PC-3 (cell line): ENCODE measurements at regions of chr16 and their contacts with region 1.

Region 1: DNA sequence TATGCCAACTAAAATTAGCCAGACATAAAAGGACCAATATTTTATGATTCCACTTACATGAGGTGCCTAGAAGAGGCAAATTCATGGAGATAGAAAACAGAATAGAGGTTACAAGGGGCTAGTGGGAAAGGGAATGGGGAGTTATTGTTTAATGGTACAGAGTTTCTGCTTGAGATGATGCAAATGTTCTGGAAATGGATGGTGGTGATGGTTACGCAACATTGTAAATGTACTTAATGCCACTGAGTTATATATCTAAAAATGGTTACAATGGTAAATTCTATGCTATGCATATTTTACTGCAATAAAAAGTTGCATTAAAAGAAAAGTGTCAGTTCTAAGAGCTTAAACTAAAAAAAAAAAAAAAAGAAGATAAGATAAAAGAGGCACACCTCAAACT is 17.9 kb downstream of the MT1X start:
- DNase-seq: no peak
- ATAC-seq: no peak
- H3K4me3 ChIP-seq: no peak overlapping the region
- H3K27ac ChIP-seq: no peak overlapping the region
- H3K4me1 ChIP-seq: peaks cover 12% of the 10 kb centered on the region
- H3K27me3 ChIP-seq: no peaks in the 10 kb centered on the region
- CTCF ChIP-seq: no peak

Region 2: DNA sequence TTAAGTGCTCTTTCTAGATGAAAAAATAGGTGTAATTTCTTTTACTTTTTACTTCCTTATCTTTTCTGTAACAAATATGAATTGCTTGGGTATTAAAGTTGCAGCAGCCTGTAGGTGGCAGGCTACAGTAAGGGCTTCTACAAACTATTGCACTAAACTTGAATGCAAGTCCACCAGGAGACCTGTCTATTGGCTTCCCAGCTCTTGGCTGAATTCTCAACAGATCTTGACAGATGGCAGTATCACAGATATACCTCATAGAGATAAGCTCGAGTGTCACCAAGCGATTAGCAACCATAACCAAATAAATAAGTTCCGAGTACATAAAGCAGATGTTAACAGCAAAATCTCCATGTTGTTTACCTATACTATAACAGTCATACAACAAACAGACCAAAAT is 186.2 kb before region 1 on chr16:
- CTCF ChIA-PET with region 1: interaction called, 6 read pairs
- POLR2A ChIA-PET with region 1: no interaction called
- intact Hi-C with region 1: loop called (anchors 1 kb)
- DNase-seq: peak; percentile 64
- ATAC-seq: peak; percentile 68
- H3K4me3 ChIP-seq: no peak overlapping the region
- H3K27ac ChIP-seq: no peak overlapping the region
- H3K4me1 ChIP-seq: peaks cover 32% of the 10 kb centered on the region
- H3K27me3 ChIP-seq: no peaks in the 10 kb centered on the region
- CTCF ChIP-seq: peak; percentile 76

Region 3: GRCh38 chr16:56576585-56577293 is 123.5 kb before region 1 on chr16:
- CTCF ChIA-PET with region 1: interaction called, 4 read pairs
- POLR2A ChIA-PET with region 1: no interaction called
- intact Hi-C with region 1: loop called (anchors 1 kb)
- DNase-seq: peak; percentile 88
- ATAC-seq: peak; percentile 93
- H3K4me3 ChIP-seq: no peak overlapping the region
- H3K27ac ChIP-seq: peak overlapping the region; percentile 40; the same call in 1 of the 2 replicates
- H3K4me1 ChIP-seq: peaks cover 4% of the 10 kb centered on the region; the same call in 1 of the 2 replicates
- H3K27me3 ChIP-seq: no peaks in the 10 kb centered on the region
- CTCF ChIP-seq: peak; percentile 84

Region 4: DNA sequence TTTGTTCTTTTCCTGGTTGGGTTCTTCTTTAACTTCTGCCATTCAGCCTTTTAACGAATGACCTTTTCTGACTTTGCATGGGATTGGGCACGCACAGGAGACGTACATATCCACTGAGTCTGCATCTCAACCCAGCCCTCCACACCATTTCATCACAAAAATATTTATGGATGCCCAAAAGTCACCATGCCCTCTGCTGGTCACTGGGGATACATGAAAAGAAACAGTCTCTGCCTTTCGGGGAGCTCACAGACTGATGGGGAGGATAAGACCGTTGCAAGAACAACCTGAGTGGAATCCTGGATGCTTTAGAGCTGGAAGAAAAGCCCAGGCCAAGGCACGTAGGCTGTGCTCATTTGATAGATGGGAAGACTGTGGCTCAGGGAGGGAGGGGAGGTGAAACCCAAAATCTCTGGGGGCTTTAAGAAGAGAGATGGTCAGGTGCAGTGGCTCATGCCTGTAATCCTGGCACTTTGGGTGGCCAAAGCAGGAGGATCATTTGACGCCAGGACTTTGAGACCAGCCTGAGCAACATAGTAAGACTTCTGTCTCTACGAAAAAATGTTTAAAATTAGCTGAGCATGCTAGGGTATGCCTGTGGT is 99.7 kb before region 1 on chr16:
- CTCF ChIA-PET with region 1: interaction called, 29 read pairs
- POLR2A ChIA-PET with region 1: no interaction called
- intact Hi-C with region 1: loop called (anchors 1 kb)
- DNase-seq: peak; percentile 68
- ATAC-seq: peak; percentile 69; the same call in 1 of the 2 replicates
- H3K4me3 ChIP-seq: peak overlapping the region; percentile 53; the same call in 1 of the 2 replicates
- H3K27ac ChIP-seq: no peak overlapping the region
- H3K4me1 ChIP-seq: peaks cover 14% of the 10 kb centered on the region
- H3K27me3 ChIP-seq: no peaks in the 10 kb centered on the region
- CTCF ChIP-seq: peak; percentile 81

Region 5: GRCh38 chr16:56716761-56717160 is 16.6 kb after region 1 on chr16:
- CTCF ChIA-PET with region 1: no interaction called
- POLR2A ChIA-PET with region 1: no interaction called
- intact Hi-C with region 1: no loop called
- DNase-seq: no peak
- ATAC-seq: no peak
- H3K4me3 ChIP-seq: no peak overlapping the region
- H3K27ac ChIP-seq: no peak overlapping the region
- H3K4me1 ChIP-seq: no peaks in the 10 kb centered on the region
- H3K27me3 ChIP-seq: no peaks in the 10 kb centered on the region
- CTCF ChIP-seq: no peak

Region 6: DNA sequence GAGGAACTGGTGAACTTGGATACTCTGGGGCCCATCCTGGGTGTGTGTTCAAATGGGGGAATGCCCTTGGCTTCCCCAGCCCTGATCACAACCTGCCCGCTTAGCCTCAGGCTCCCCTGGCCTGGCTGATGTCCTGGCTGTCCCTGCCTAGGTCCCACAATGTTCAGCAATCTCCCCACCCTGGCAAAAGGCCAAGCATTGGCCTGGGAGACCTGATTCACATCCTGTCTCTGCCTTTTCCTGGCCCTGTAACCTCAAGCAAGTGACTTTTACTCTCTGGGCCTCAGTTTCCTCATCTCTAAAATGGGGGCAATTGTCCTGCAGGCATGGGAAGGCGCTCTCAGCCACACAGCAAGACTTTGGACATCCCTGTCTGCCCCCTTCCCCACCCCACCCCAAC is 406.6 kb after region 1 on chr16:
- CTCF ChIA-PET with region 1: interaction called, 23 read pairs
- POLR2A ChIA-PET with region 1: no interaction called
- intact Hi-C with region 1: no loop called
- DNase-seq: peak; percentile 19
- ATAC-seq: no peak
- H3K4me3 ChIP-seq: no peak overlapping the region
- H3K27ac ChIP-seq: no peak overlapping the region
- H3K4me1 ChIP-seq: no peaks in the 10 kb centered on the region
- H3K27me3 ChIP-seq: no peaks in the 10 kb centered on the region
- CTCF ChIP-seq: no peak